H1 (cell line): ENCODE measurements at regions of chr11 and their contacts with region 1.

Region 1: GRCh38 chr11:124865921-124866583 is 820 bp downstream of the ROBO3 start:
- DNase-seq: peak in 1 of 2 experiments; percentile 89
- H3K4me3 ChIP-seq: peak overlapping the region; percentile 17 to 50 (median 24); a peak in 6 of 8 replicates
- H3K27ac ChIP-seq: no peak overlapping the region
- H3K4me1 ChIP-seq: peaks cover 0 to 23% (median 16%) of the 10 kb centered on the region in 4 experiments; a peak in 6 of 7 replicates
- H3K27me3 ChIP-seq: peaks cover 97 to 100% (median 100%) of the 10 kb centered on the region in 4 experiments
- CTCF ChIP-seq: peak; percentile 70 to 77 (median 75)
- EP300 ChIP-seq: no peak
- POLR2A ChIP-seq: no peak
- RAD21 ChIP-seq: peak; percentile 44 to 58

Region 2: GRCh38 chr11:124644426-124645280 is 221.4 kb before region 1 on chr11:
- CTCF ChIA-PET with region 1: interaction called, 13 read pairs
- POLR2A ChIA-PET with region 1: no interaction called
- DNase-seq: peak in 1 of 2 experiments; percentile 68
- H3K4me3 ChIP-seq: peak overlapping the region in 1 of 4 experiments; percentile 37; a peak in 2 of 8 replicates
- H3K27ac ChIP-seq: no peak overlapping the region
- H3K4me1 ChIP-seq: peaks cover 0 to 4% (median 2%) of the 10 kb centered on the region in 4 experiments; a peak in 3 of 7 replicates
- H3K27me3 ChIP-seq: no peaks in the 10 kb centered on the region
- CTCF ChIP-seq: peak; percentile 38 to 87 (median 75)
- EP300 ChIP-seq: no peak
- POLR2A ChIP-seq: no peak
- RAD21 ChIP-seq: peak; percentile 85

Region 3: DNA sequence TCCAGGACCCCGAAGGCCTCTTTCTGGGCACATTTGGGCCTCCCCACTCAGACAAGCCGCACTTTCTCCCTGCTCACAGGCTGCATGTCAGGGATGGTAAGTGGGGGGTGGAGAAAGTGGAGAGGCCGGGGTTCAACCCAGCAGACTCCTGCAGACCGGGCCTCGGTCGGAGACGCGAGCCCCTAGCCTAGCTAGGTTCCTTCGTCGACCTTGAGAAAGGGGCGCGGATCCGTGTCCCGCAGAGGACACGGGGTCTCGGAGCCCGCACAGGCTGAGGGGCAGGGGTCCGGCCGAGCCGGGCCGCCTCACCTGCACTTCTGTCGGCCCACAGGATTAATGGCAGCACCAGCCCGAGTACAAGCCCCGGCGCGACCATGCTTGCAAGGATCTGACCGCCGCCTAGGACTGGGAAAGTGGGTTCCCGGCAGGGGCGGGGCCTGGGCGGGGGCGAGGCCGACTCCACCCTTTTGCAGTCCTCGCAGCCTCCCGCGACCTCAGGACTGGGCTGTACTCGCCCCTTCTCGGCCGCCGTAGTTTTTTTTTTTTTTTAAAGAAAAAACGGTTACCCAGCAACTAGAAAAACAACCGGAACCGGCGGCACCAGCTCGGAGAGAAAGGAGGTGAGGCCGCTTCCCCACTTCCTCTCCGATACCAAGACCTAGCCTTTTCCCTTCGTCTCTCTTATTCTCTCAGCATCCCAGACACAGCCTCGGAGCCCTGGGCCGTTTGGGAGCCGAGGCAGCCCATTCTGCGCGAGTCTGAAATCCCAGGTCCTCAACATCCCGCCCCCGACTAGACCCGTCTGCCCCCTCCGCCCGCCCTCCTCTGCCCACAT is 192.5 kb before region 1 on chr11 and contains the starts of genes SIAE and SPA17:
- CTCF ChIA-PET with region 1: interaction called, 11 read pairs
- POLR2A ChIA-PET with region 1: interaction called, 3 read pairs
- DNase-seq: peak; percentile 86 to 96
- H3K4me3 ChIP-seq: peak within 1 kb of the TSS; percentile 71 to 90 (median 79)
- H3K27ac ChIP-seq: no peak within 1 kb of the TSS
- H3K4me1 ChIP-seq: no peaks in the 10 kb centered on the region; a peak in 1 of 7 replicates
- H3K27me3 ChIP-seq: peaks cover 0 to 15% (median 5%) of the 10 kb centered on the region in 4 experiments; a peak in 6 of 7 replicates
- CTCF ChIP-seq: no peak
- EP300 ChIP-seq: peak in 1 of 2 experiments; percentile 82; a peak in 1 of 3 replicates
- POLR2A ChIP-seq: peak in 1 of 2 experiments; percentile 80; a peak in 2 of 3 replicates
- RAD21 ChIP-seq: no peak
- total RNA-seq, gene SIAE: 1.7 and 2.3 TPM in 2 replicates
- total RNA-seq, gene SPA17: 4.2 and 5.2 TPM in 2 replicates

Region 4: GRCh38 chr11:124746621-124747243 is 119.3 kb before region 1 on chr11:
- CTCF ChIA-PET with region 1: interaction called, 14 read pairs
- POLR2A ChIA-PET with region 1: no interaction called
- DNase-seq: peak; percentile 77 to 88
- H3K4me3 ChIP-seq: peak overlapping the region; percentile 72 to 83 (median 77)
- H3K27ac ChIP-seq: no peak overlapping the region
- H3K4me1 ChIP-seq: peaks cover 0 to 19% (median 16%) of the 10 kb centered on the region in 4 experiments; a peak in 6 of 7 replicates
- H3K27me3 ChIP-seq: peaks cover 92 to 99% (median 97%) of the 10 kb centered on the region in 4 experiments
- CTCF ChIP-seq: peak; percentile 39 to 73 (median 71); a peak in 3 of 4 replicates
- EP300 ChIP-seq: no peak
- POLR2A ChIP-seq: no peak
- RAD21 ChIP-seq: peak; percentile 29 to 36; a peak in 2 of 4 replicates

Region 5: DNA sequence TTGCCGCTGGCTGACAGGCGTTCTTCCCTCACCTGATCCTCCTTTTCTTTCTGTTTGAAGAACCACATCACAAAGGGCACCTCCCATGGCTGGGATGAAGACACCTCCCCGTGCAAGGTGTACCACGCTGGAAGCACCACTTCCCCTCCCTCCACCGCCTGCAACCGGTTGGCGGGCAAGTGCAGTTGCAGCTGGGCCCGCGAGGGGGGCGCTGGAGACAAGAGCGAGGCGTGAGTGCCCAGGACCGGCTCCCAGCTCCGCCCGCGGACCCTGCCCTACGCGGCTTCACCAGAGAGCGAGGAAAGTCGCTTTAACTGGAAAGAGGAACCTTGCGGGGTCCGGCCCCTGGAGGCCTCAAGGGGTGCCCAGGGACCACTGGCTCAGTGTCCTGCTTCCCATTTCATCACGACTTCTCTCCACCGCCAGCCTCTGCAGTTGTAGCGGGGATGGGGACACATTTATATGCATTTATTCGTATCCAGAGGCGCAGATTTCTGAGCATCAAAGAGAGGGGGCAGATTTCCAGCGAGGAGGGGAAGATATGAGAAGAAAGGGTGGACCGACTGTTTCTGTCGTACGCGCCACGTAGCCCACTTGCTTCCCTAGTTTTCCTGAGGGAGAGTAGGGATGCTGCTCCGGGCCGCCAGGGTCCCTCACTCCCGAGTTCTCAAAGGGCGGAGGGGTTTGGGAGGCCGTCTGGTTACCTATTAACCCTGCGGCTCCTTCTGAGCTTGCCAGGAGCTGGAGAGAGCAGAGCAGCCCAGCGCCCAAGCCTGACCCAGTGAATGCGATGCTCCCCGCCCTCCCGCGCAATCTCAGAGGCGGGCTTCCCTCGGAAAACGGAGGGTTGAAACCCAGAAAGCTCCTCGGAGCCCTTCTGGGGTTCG is 107.5 kb before region 1 on chr11:
- CTCF ChIA-PET with region 1: interaction called, 40 read pairs
- POLR2A ChIA-PET with region 1: interaction called, 3 read pairs
- DNase-seq: peak; percentile 70 to 90
- H3K4me3 ChIP-seq: peak overlapping the region; percentile 18 to 58 (median 34); a peak in 7 of 8 replicates
- H3K27ac ChIP-seq: no peak overlapping the region
- H3K4me1 ChIP-seq: peaks cover 6 to 43% (median 27%) of the 10 kb centered on the region in 4 experiments
- H3K27me3 ChIP-seq: peaks cover 76 to 98% (median 91%) of the 10 kb centered on the region in 4 experiments
- CTCF ChIP-seq: peak; percentile 74 to 88 (median 86)
- EP300 ChIP-seq: no peak
- POLR2A ChIP-seq: no peak
- RAD21 ChIP-seq: peak; percentile 51 to 65

Region 6: DNA sequence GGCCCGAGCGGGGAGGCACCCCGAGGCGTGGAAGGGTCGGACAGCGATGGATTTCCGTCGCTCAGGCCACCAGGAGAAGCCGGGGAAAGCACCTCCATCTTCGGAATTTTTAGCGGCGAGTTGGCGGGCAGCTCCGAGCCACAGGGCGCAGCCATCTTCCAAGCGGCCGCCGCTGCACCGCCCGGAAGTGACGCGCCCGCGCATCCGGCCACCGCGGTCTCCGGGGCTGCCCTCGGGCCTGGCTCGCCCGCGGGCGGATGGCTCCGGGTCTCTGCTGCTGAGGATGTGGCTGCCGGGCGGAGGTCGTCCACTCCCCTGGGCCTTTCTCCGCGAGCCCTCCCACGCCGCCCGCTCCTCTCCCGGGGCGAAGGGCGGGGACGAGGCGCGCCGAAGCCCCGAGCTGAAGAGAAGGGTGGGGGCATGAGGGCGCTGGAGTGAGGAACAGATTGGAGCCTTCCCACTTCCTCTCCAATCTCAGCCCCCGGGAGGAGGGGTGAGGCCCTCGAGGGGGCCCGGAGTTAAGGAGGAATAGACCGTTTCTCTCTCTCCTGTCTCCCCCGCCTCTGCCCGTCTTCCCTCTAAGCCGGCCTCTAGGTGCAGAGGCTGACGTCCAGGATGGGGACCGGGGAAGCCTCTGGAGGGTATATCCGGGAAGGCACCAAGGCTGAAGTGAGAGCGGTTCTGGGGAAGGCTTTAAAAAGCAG is 65.7 kb before region 1 on chr11 and contains the start of gene MSANTD2:
- CTCF ChIA-PET with region 1: interaction called, 13 read pairs
- POLR2A ChIA-PET with region 1: no interaction called
- DNase-seq: peak; percentile 29 to 90
- H3K4me3 ChIP-seq: peak within 1 kb of the TSS; percentile 70 to 86 (median 74)
- H3K27ac ChIP-seq: peak within 1 kb of the TSS; percentile 96
- H3K4me1 ChIP-seq: peaks cover 0 to 6% (median under 1%) of the 10 kb centered on the region in 4 experiments; a peak in 3 of 7 replicates
- H3K27me3 ChIP-seq: no peaks in the 10 kb centered on the region
- CTCF ChIP-seq: no peak
- EP300 ChIP-seq: no peak
- POLR2A ChIP-seq: peak; percentile 97 to 98
- RAD21 ChIP-seq: no peak
- total RNA-seq, gene MSANTD2: 15.9 and 17.3 TPM in 2 replicates

Region 7: DNA sequence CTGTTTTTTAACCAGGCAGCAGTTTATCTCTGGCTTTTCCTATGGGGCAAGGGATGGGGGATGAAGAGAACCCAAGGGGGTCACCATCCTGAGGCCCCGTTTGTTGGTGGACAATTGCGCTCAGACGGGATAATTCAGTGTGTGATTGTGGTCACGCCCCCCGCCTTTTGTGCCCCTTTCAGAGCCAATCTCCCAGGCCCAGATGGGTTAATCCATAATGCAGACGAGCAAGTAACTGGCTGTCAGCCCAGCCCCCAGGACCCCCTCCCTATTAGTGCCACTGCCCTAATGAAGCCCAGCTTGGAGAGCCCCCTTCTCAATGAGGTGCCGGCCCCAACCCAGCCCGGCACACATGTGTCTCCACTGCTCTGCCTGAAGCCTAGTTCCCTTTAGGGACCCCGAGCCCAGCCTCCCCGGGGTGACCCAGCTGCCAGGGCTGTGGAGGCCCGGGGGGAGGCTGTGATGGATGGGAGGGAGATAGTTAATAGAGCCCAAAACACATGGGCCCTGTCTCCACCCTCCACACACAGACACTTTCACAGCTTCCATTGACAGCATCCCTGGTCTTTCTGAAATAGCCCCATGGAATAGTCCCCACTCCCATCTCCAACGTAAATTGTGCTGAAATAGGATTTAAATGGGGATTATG is 19.9 kb before region 1 on chr11:
- CTCF ChIA-PET with region 1: interaction called, 23 read pairs
- POLR2A ChIA-PET with region 1: interaction called, 6 read pairs
- DNase-seq: no peak
- H3K4me3 ChIP-seq: no peak overlapping the region
- H3K27ac ChIP-seq: no peak overlapping the region
- H3K4me1 ChIP-seq: peaks cover 3 to 19% (median 4%) of the 10 kb centered on the region in 4 experiments; a peak in 5 of 7 replicates
- H3K27me3 ChIP-seq: peaks cover 77 to 98% (median 93%) of the 10 kb centered on the region in 4 experiments
- CTCF ChIP-seq: no peak
- EP300 ChIP-seq: no peak
- POLR2A ChIP-seq: no peak
- RAD21 ChIP-seq: no peak

Region 8: DNA sequence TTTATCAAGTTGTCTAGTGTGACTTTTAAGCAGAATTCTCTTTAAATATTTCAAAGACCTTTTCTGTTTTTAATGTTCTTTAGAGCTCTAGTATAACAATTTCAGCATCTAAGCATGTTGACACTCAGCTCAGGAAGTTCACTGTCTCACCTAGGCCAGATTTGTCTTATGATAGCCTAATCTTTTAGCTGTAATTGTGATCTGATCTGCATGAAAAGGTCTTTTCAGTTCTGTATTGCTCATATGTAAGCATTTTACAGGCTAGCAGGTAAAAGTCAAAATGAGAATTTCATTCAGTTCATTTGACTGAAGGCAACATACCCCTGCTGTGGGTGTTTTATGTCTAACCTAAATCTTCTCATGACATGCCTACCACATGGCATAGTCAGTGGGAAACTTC is 150.4 kb after region 1 on chr11:
- CTCF ChIA-PET with region 1: no interaction called
- POLR2A ChIA-PET with region 1: no interaction called
- DNase-seq: no peak
- H3K4me3 ChIP-seq: no peak overlapping the region
- H3K27ac ChIP-seq: no peak overlapping the region
- H3K4me1 ChIP-seq: no peaks in the 10 kb centered on the region
- H3K27me3 ChIP-seq: no peaks in the 10 kb centered on the region
- CTCF ChIP-seq: no peak
- EP300 ChIP-seq: no peak
- POLR2A ChIP-seq: no peak
- RAD21 ChIP-seq: no peak